Endothelial cell of umbilical vein (primary cell): ENCODE measurements at regions of chr14 and their contacts with region 1.

Region 1: DNA sequence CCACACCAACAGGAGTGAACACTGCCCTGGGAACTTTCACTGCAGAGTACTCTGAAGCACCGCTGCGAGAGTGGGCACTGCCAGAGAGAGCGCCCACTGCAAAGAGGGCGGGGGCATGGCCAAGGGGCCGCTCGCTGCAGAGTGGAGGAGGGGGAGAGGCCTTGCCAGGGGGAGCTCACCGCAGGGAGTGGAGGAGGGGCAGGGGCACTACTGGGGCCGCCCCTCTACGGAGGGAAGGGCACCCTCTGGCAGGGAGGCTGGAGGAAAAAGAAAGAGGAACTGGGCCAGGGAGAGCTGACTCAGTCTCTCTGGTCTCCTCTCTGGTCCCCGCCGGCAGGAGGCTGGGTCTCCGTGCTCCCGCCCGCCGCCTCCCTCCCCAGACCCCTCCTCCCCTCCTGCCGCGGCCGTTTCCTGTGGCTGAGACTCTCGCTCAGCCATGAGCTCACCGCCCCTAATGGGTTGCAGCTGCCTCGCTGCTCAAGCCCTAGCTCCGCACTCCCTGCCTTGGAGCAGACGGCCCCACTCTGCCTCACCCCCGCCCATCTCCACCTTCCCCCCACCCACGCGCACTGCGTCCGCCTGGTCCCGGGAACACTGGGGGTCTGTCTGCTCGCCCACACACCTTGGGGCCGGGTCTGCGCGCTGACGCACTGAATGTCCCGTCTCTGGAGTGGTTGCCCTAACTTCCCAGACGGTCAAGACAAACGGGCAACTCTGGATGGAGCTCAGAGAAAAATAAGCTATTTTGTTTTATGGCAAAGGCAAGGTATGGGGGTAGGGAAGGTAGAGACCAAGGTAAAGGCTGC is 1.3 kb downstream of the ARHGEF40 start:
- DNase-seq: peak; percentile 84
- H3K4me3 ChIP-seq: peak overlapping the region in 2 of 3 experiments; percentile 54 to 55
- H3K27ac ChIP-seq: no peak overlapping the region
- H3K4me1 ChIP-seq: peaks cover 10% of the 10 kb centered on the region
- H3K27me3 ChIP-seq: peaks cover 16 to 38% of the 10 kb centered on the region in 2 experiments
- CTCF ChIP-seq: no peak
- POLR2A ChIP-seq: no peak

Region 2: GRCh38 chr14:20652996-20653975 is 418.1 kb before region 1 on chr14:
- CTCF ChIA-PET with region 1: no interaction called
- POLR2A ChIA-PET with region 1: no interaction called
- dilution Hi-C with region 1: no loop called
- intact Hi-C with region 1: no loop called
- DNase-seq: peak; percentile 32
- H3K4me3 ChIP-seq: no peak overlapping the region
- H3K27ac ChIP-seq: no peak overlapping the region
- H3K4me1 ChIP-seq: peaks cover 2% of the 10 kb centered on the region
- H3K27me3 ChIP-seq: peaks cover 36 to 44% of the 10 kb centered on the region in 2 experiments
- CTCF ChIP-seq: no peak
- POLR2A ChIP-seq: no peak

Region 3: DNA sequence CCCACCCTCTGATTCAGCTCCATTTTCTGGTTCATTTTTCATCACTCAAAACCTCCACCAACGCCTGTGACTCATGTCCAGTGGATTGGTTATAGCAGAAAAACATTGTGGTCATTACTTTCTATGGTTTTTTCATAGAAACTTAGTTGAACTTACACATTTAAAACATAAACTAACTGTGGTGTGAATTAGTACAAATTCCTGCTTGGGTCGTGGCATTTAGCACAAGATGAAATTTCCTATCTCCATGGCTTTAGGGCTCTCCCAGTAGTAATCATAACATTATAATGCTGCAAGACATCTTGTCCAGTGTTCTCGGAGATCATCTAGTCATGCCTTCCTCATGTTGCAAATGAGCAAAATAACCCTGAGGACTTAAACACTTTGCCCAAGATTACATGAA is 22.2 kb before region 1 on chr14:
- CTCF ChIA-PET with region 1: interaction called, 10 read pairs
- POLR2A ChIA-PET with region 1: no interaction called
- dilution Hi-C with region 1: no loop called
- intact Hi-C with region 1: no loop called
- DNase-seq: no peak
- H3K4me3 ChIP-seq: no peak overlapping the region
- H3K27ac ChIP-seq: no peak overlapping the region
- H3K4me1 ChIP-seq: no peaks in the 10 kb centered on the region
- H3K27me3 ChIP-seq: peaks cover 24 to 25% of the 10 kb centered on the region in 2 experiments
- CTCF ChIP-seq: no peak
- POLR2A ChIP-seq: no peak

Region 4: GRCh38 chr14:21092273-21093011 is 21.0 kb after region 1 on chr14:
- CTCF ChIA-PET with region 1: interaction called, 90 read pairs
- POLR2A ChIA-PET with region 1: no interaction called
- dilution Hi-C with region 1: no loop called
- intact Hi-C with region 1: loop called (anchors 1 kb)
- DNase-seq: peak; percentile 68
- H3K4me3 ChIP-seq: no peak overlapping the region
- H3K27ac ChIP-seq: no peak overlapping the region
- H3K4me1 ChIP-seq: peaks cover 3% of the 10 kb centered on the region
- H3K27me3 ChIP-seq: peaks cover 0 to 4% of the 10 kb centered on the region in 2 experiments
- CTCF ChIP-seq: peak; percentile 100
- POLR2A ChIP-seq: no peak

Region 5: GRCh38 chr14:21103710-21104447 is 32.5 kb after region 1 on chr14:
- CTCF ChIA-PET with region 1: interaction called, 203 read pairs
- POLR2A ChIA-PET with region 1: interaction called, 5 read pairs
- dilution Hi-C with region 1: no loop called
- intact Hi-C with region 1: loop called (anchors 1 kb)
- DNase-seq: peak; percentile 94
- H3K4me3 ChIP-seq: peak overlapping the region in 2 of 3 experiments; percentile 47 to 60
- H3K27ac ChIP-seq: peak overlapping the region; percentile 93
- H3K4me1 ChIP-seq: peaks cover 20% of the 10 kb centered on the region
- H3K27me3 ChIP-seq: peaks cover 12 to 18% of the 10 kb centered on the region in 2 experiments
- CTCF ChIP-seq: peak; percentile 82 to 85
- POLR2A ChIP-seq: peak; percentile 77

Region 6: GRCh38 chr14:21109377-21110260 is 38.2 kb after region 1 on chr14:
- CTCF ChIA-PET with region 1: interaction called, 203 read pairs
- POLR2A ChIA-PET with region 1: interaction called, 5 read pairs
- dilution Hi-C with region 1: no loop called
- intact Hi-C with region 1: loop called (anchors 1 kb)
- DNase-seq: no peak
- H3K4me3 ChIP-seq: no peak overlapping the region
- H3K27ac ChIP-seq: no peak overlapping the region
- H3K4me1 ChIP-seq: peaks cover 7% of the 10 kb centered on the region
- H3K27me3 ChIP-seq: peaks cover 2 to 3% of the 10 kb centered on the region in 2 experiments
- CTCF ChIP-seq: no peak
- POLR2A ChIP-seq: no peak

Region 7: DNA sequence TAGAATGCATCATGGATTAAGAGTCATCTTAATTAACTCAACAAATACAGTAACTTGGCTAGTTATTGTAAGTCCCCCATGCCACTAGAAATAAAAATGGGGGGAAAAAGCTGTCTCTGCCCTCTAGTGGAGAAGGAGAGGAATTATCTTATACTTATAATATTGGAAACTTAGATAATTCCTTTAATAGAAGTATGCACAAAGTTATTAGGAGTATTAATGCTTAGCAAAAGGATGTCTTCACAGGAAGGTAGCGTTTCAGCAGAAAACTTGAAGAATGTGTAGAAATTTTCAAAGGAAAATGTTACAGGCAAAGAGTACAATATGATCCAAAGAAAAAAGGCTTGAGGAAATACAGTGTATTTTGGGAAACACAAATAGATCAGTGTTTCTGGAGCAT is 64.6 kb after region 1 on chr14:
- CTCF ChIA-PET with region 1: interaction called, 6 read pairs
- POLR2A ChIA-PET with region 1: no interaction called
- dilution Hi-C with region 1: no loop called
- intact Hi-C with region 1: loop called (anchors 1 kb)
- DNase-seq: peak; percentile 21
- H3K4me3 ChIP-seq: no peak overlapping the region
- H3K27ac ChIP-seq: no peak overlapping the region
- H3K4me1 ChIP-seq: no peaks in the 10 kb centered on the region
- H3K27me3 ChIP-seq: no peaks in the 10 kb centered on the region
- CTCF ChIP-seq: peak; percentile 41 to 43
- POLR2A ChIP-seq: no peak